BJ (cell line): ENCODE measurements at regions of chr7 and their contacts with region 1.

Region 1: DNA sequence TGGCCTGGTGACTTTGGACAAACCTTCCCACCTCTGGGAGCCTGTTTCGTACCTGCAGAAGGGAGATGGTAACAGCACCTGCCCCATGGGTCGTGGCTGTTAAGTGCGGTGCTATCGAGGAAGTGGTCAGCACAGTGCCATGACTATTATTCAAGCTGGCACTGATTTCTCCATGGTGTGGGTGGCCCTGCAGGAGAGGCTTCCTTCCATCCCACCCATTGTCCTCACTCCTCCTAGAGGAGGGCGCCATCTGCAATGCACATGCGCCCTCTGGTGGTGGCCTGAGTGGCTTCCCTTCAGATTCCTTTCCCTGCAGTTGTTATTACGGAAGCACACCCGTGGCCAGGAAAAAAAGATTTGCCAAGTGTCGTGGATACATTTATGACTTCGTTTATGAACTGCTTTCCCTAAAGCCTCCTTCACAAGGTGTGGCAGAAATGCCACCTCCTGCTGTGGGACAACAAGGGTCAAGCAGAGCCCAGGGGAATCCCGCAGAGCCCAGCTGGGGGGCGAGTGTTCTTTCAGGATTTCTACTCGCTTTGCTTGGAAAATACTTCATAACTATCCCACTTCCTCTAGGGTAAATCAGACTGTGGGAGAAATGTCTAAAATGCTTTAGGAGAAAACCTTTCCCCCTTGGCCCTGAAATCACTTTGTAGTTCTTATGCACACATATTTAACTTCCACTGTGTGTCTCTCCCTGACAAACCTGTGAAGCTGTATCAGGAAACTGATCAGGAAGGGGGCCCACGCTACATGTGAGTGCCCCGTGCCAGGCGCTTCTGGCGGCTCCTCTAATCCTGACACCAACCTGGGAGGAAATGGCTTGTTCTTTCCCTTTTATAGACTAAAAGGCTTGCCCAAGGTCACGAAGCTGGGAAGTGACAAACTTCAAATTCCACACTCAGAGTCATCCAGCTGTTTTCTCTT is 98.0 kb upstream of the ANLN start:
- DNase-seq: no peak
- H3K4me3 ChIP-seq: peak overlapping the region; percentile 37
- H3K27me3 ChIP-seq: no peaks in the 10 kb centered on the region
- CTCF ChIP-seq: peak; percentile 94

Region 2: DNA sequence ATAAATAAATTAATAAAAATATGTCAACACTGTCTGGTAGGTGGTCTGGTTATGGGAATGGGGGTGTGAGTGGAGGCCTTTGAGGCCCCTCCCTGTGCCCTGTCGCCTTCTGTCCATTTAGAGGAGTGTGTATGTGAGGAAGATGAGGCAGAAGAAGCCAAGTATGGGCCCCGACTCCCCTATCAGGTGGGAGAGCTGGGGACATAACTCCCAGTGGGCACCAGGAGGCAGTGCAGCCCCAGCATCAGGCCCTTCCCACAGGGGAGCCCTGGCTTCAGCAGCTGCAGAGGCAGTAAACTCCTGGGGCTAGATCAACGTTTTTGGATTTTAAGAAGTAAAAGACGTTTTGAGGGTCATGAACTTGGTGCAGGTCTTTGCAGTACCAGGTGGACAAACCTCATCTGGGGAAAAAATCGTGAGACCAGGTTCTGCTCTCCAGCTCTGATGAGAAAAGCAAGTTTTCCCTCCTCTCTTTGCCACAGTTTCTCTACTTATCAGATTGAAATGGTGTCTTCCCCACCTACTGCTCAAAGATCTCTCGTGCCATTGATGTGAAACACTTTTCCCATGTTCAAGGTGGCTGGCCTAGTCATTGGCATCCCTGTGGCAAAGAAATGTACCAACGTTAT is 306.4 kb before region 1 on chr7:
- CTCF ChIA-PET with region 1: interaction called, 149 read pairs
- POLR2A ChIA-PET with region 1: no interaction called
- DNase-seq: no peak
- H3K4me3 ChIP-seq: no peak overlapping the region
- H3K27me3 ChIP-seq: peaks cover 3% of the 10 kb centered on the region; the same call in 1 of the 2 replicates
- CTCF ChIP-seq: peak; percentile 97

Region 3: DNA sequence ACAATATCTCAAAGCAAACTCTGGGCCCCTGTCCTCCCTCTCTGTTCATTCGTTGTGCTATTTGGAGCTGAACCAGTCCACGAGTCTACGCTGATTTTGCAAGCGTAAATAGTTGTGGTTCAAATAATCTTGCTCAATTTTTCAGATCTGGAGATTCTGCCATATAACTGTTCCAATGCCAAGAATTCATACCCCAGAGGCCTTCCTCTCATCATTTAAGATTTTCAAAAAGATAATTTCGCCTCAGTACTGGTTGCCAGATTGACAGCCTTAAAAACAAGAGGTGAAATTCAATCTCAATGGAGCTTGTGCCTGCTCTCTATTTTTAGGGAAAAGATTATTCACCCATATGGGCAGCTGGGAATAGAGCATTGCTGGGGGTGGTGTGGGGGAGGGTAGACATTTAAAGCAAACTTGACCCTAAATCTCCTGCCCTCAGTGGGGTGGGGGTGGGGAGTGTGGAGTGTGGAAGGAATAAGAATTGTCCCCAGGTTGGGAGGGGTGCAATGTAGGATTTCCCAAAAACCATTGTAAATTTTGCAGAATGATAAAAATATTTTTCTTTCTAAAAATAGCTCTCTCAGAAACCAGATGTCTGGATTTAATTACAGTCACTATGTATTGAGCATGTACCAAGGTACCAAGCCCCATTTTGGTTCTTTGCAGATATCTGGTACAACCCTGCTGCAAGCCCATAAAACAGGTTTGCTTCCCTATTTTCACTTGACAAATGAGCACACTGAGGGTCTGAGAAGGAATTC is 243.3 kb before region 1 on chr7:
- CTCF ChIA-PET with region 1: interaction called, 16 read pairs
- POLR2A ChIA-PET with region 1: no interaction called
- DNase-seq: peak; percentile 93
- H3K4me3 ChIP-seq: no peak overlapping the region
- H3K27me3 ChIP-seq: no peaks in the 10 kb centered on the region; the same call in 1 of the 2 replicates
- CTCF ChIP-seq: no peak

Region 4: DNA sequence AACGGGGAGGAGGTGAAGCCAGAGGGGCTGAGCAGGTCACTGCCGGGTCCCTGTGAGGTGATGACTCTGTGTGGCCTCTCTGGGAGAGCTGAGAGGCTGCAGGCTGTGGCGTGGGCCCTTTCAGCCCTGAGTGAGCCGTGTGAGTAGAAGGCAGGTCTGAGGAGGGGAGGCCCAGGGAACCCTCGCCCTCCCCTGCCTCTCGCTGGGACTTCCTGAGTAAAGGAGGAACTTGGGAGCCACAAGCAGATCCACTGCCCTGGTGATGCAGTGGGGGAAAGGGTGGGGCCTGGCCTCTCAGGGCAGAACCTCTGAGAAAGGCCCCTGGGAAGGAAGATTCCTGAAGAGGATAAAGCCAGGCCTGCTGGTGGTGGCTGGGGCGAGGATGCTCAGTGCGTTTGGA is 115.8 kb before region 1 on chr7:
- CTCF ChIA-PET with region 1: no interaction called
- POLR2A ChIA-PET with region 1: no interaction called
- DNase-seq: no peak
- H3K4me3 ChIP-seq: no peak overlapping the region
- H3K27me3 ChIP-seq: no peaks in the 10 kb centered on the region
- CTCF ChIP-seq: no peak

Region 5: GRCh38 chr7:36278620-36279172 is 13.0 kb before region 1 on chr7:
- CTCF ChIA-PET with region 1: interaction called, 10 read pairs
- POLR2A ChIA-PET with region 1: no interaction called
- DNase-seq: peak; percentile 82
- H3K4me3 ChIP-seq: no peak overlapping the region
- H3K27me3 ChIP-seq: no peaks in the 10 kb centered on the region
- CTCF ChIP-seq: no peak

Region 6: GRCh38 chr7:36303202-36304098 is 11.8 kb after region 1 on chr7:
- CTCF ChIA-PET with region 1: interaction called, 56 read pairs
- POLR2A ChIA-PET with region 1: interaction called, 4 read pairs
- DNase-seq: peak; percentile 87
- H3K4me3 ChIP-seq: no peak overlapping the region
- H3K27me3 ChIP-seq: no peaks in the 10 kb centered on the region; the same call in 1 of the 2 replicates
- CTCF ChIP-seq: no peak

Region 7: GRCh38 chr7:36315309-36316133 is 23.9 kb after region 1 on chr7:
- CTCF ChIA-PET with region 1: interaction called, 39 read pairs
- POLR2A ChIA-PET with region 1: no interaction called
- DNase-seq: no peak
- H3K4me3 ChIP-seq: no peak overlapping the region
- H3K27me3 ChIP-seq: peaks cover 2% of the 10 kb centered on the region; the same call in 1 of the 2 replicates
- CTCF ChIP-seq: no peak